ENCODE measurements at regions of chr2 and their contacts with region 1.

Region 1: DNA sequence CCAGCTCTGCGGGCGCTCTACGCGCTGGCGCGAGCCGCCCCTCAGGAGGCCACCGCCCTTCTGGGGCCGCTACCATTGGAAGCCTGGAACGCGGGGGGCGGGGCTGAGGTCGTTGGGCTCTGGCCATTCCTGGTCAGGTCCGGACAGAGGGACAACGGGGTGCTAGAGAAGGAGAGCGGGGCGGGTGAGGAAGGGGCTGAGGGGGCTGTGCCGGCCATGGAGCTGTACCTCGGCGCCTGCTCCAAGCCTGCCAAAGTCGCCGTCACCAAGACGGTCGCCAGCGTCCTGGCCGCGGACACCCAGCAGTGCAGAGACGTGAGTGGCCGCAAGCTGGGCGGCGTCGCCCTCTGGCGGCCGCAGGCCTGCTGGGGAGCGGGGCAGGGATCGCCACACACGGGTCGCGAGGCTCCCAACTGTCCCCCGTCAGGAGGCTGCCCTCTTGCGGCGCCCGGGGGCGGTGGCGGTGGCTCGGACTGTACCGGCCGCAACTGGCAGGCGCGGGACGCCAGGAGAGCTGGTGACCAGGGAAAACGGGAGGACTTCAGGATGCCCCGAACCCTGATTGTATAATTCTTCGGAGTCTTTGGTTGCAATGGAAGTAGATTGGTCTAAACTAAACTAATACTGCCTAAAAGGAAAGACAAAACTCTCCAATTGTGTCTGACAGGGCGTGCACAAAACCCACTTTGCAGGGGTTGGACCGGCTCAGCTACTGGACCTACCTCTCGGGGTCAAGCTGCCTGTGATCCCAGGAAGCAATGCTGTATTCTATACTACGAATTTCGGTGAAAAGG is at the start of gene FSIP2:
- DNase-seq: peak; percentile 74
- ATAC-seq: peak; percentile 92
- H3K4me3 Mint-ChIP-seq: no peak within 1 kb of the TSS
- H3K27ac Mint-ChIP-seq: no peak within 1 kb of the TSS
- H3K4me1 Mint-ChIP-seq: no peaks in the 10 kb centered on the region
- H3K27me3 Mint-ChIP-seq: peaks cover 20% of the 10 kb centered on the region
- total RNA-seq, gene FSIP2: 0.05 to 0.28 TPM

Region 2: DNA sequence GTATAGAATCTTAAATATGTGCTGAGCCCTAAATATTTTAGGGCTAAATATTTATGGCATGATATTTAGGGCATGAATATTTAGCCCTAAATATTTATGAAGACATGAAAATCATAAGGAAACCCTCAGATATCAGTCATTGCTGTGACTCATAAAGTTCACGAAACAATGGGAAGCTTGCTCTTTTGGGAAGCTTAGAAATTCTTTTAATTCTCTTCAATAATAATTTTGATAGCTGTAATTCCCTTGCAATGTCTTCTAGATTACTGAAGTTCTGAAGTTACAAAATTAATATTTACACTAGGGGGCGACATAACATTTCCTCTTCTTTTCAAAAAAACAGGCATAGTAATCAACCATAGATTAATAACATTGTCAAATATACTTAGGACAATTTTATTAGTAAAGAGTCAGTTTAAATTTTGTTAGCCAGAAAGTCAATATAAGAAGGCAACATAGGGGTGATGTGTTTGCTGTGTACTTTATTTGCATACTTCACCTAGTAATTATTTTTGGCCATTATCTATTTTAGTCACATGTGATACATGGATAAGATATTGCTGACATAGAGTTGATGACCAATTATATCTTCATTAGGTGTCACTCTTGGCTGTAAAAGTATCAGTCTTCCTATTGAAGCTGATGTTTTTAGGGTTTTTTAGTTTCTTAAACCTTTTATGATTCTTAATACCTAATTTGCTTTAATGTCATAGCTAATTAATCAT is 1127.4 kb before region 1 on chr2:
- CTCF ChIA-PET with region 1: no interaction called
- POLR2A ChIA-PET with region 1: no interaction called
- intact Hi-C with region 1: no loop called
- DNase-seq: no peak
- ATAC-seq: no peak
- H3K4me3 Mint-ChIP-seq: no peak overlapping the region
- H3K27ac Mint-ChIP-seq: no peak overlapping the region
- H3K4me1 Mint-ChIP-seq: no peaks in the 10 kb centered on the region
- H3K27me3 Mint-ChIP-seq: no peaks in the 10 kb centered on the region

Region 3: DNA sequence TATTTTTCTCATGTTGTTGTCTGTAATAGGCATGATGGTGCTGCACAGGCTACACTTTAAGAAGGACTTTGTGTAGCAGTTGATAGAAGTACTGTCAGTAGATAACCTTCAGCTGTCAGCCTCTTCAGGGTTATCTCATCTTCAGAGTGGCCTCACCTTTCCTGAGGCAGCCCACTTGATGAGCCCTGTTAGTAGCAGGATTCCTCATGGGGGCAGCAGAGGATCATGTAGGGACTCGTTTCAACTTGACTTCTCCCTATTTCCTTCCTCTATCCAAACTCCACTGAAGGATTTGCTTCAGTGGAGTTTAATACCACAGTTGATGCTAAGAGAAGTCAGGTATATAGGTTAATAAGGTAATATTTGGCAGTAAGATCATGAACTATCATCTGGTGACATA is 530.6 kb before region 1 on chr2:
- CTCF ChIA-PET with region 1: no interaction called
- POLR2A ChIA-PET with region 1: no interaction called
- intact Hi-C with region 1: loop called in 1 of 2 experiments (anchors 10 kb)
- DNase-seq: peak; percentile 5
- ATAC-seq: no peak
- H3K4me3 Mint-ChIP-seq: no peak overlapping the region
- H3K27ac Mint-ChIP-seq: no peak overlapping the region
- H3K4me1 Mint-ChIP-seq: no peaks in the 10 kb centered on the region
- H3K27me3 Mint-ChIP-seq: no peaks in the 10 kb centered on the region

Region 4: GRCh38 chr2:185291035-185291647 is 447.7 kb before region 1 on chr2:
- CTCF ChIA-PET with region 1: no interaction called
- POLR2A ChIA-PET with region 1: no interaction called
- intact Hi-C with region 1: loop called in 1 of 2 experiments (anchors 1 kb)
- DNase-seq: peak; percentile 52
- ATAC-seq: no peak
- H3K4me3 Mint-ChIP-seq: no peak overlapping the region
- H3K27ac Mint-ChIP-seq: no peak overlapping the region
- H3K4me1 Mint-ChIP-seq: no peaks in the 10 kb centered on the region
- H3K27me3 Mint-ChIP-seq: no peaks in the 10 kb centered on the region

Region 5: GRCh38 chr2:186256540-186256939 is 517.7 kb after region 1 on chr2:
- CTCF ChIA-PET with region 1: no interaction called
- POLR2A ChIA-PET with region 1: no interaction called
- intact Hi-C with region 1: loop called in 1 of 2 experiments (anchors 2 kb)
- DNase-seq: no peak
- ATAC-seq: no peak
- H3K4me3 Mint-ChIP-seq: no peak overlapping the region
- H3K27ac Mint-ChIP-seq: no peak overlapping the region
- H3K4me1 Mint-ChIP-seq: no peaks in the 10 kb centered on the region
- H3K27me3 Mint-ChIP-seq: no peaks in the 10 kb centered on the region